ENCODE measurements at regions of chr18 and their contacts with region 1.

Region 1: GRCh38 chr18:35756506-35757117 is 175.1 kb downstream of the GALNT1 start:
- DNase-seq: peak; percentile 59 to 70
- H3K4me3 ChIP-seq: no peak overlapping the region
- H3K4me1 ChIP-seq: no peaks in the 10 kb centered on the region
- H3K27me3 ChIP-seq: no peaks in the 10 kb centered on the region

Region 2: GRCh38 chr18:35949903-35950627 is 193.5 kb after region 1 on chr18:
- in situ Hi-C with region 1: loop called (anchors 5 kb)
- DNase-seq: peak; percentile 71 to 75
- H3K4me3 ChIP-seq: peak overlapping the region; percentile 47
- H3K4me1 ChIP-seq: no peaks in the 10 kb centered on the region; the same call in 1 of the 2 replicates
- H3K27me3 ChIP-seq: no peaks in the 10 kb centered on the region

Measured in HAP-1 (cell line).